ENCODE measurements at regions of chr11 and their contacts with region 1.

Region 1: DNA sequence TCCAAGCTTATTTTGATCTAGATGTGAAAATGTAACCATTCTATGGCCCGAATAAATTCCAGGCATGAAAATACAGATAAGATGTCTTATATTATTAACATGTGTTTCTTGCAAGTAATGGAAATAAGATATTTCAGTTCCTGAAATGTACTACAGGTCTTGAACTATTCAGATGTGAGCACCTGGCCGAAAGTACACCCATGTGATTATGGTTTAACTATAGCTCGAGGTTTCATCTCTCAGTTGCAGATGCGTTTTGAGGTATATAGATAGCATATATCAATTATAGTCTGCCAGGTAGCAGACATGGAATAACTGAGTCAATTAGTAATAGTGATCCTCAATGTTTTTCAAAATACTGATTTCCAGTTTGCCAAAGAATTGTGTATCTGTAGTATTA is 68.3 kb downstream of the DDIAS start:
- DNase-seq: no peak
- ATAC-seq: no peak
- H3K4me3 ChIP-seq: no peak overlapping the region
- H3K27ac ChIP-seq: no peak overlapping the region
- H3K4me1 ChIP-seq: no peaks in the 10 kb centered on the region
- H3K27me3 ChIP-seq: no peaks in the 10 kb centered on the region
- CTCF ChIP-seq: no peak

Region 2: GRCh38 chr11:82676473-82677094 is 293.2 kb before region 1 on chr11:
- CTCF ChIA-PET with region 1: no interaction called
- POLR2A ChIA-PET with region 1: no interaction called
- in situ Hi-C with region 1: no loop called
- intact Hi-C with region 1: no loop called
- DNase-seq: no peak
- ATAC-seq: no peak
- H3K4me3 ChIP-seq: no peak overlapping the region
- H3K27ac ChIP-seq: no peak overlapping the region
- H3K4me1 ChIP-seq: peaks cover 3% of the 10 kb centered on the region; the same call in 1 of the 2 replicates
- H3K27me3 ChIP-seq: no peaks in the 10 kb centered on the region
- CTCF ChIP-seq: peak; percentile 77

Region 3: DNA sequence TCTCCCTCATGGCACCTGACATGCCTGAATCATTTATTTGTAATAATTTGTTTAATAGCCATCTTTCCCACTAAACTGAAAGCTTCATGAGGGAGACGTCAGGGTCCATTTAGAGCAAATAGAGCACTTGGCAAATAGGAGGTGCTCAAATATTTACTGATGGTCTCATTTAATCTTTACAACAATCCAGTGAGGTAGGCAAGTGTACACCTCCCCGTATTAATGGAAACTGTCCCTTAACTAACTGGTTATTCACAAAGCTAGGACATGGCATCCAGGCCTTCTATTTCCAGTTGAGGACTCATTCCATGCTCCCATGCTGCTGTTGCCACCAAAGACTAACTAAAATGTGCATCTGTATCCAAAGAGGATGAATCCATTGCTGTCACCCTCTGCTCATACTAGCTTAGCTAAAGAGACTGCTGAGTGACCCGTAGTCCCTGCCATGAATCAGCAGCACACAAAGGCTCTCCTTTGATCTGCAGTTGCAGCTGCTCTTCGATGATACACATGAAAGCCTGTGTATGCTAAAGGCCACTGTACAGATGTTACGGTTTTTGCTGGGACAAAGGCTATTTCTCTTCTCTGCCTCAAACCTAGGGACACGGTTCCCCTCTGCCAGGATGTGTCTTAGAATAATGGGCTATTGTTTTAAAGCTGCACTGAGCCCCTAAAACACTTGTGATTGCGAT is 19.3 kb after region 1 on chr11:
- CTCF ChIA-PET with region 1: no interaction called
- POLR2A ChIA-PET with region 1: interaction called, 14 read pairs
- in situ Hi-C with region 1: no loop called
- intact Hi-C with region 1: no loop called
- DNase-seq: no peak
- ATAC-seq: no peak; the same call in 1 of the 2 replicates
- H3K4me3 ChIP-seq: no peak overlapping the region
- H3K27ac ChIP-seq: no peak overlapping the region
- H3K4me1 ChIP-seq: no peaks in the 10 kb centered on the region
- H3K27me3 ChIP-seq: no peaks in the 10 kb centered on the region
- CTCF ChIP-seq: no peak

Region 4: GRCh38 chr11:83235825-83236224 is 266.0 kb after region 1 on chr11:
- CTCF ChIA-PET with region 1: no interaction called
- POLR2A ChIA-PET with region 1: no interaction called
- in situ Hi-C with region 1: no loop called
- intact Hi-C with region 1: no loop called
- DNase-seq: no peak
- ATAC-seq: no peak
- H3K4me3 ChIP-seq: no peak overlapping the region
- H3K27ac ChIP-seq: no peak overlapping the region
- H3K4me1 ChIP-seq: no peaks in the 10 kb centered on the region
- H3K27me3 ChIP-seq: no peaks in the 10 kb centered on the region; the same call in 1 of the 2 replicates
- CTCF ChIP-seq: no peak